Activated CD4-positive, alpha-beta memory T cell treated with anti-CD3 and anti-CD28 coated beads for 36 hours (primary cell): ENCODE measurements at regions of chr2 and their contacts with region 1.

Region 1: DNA sequence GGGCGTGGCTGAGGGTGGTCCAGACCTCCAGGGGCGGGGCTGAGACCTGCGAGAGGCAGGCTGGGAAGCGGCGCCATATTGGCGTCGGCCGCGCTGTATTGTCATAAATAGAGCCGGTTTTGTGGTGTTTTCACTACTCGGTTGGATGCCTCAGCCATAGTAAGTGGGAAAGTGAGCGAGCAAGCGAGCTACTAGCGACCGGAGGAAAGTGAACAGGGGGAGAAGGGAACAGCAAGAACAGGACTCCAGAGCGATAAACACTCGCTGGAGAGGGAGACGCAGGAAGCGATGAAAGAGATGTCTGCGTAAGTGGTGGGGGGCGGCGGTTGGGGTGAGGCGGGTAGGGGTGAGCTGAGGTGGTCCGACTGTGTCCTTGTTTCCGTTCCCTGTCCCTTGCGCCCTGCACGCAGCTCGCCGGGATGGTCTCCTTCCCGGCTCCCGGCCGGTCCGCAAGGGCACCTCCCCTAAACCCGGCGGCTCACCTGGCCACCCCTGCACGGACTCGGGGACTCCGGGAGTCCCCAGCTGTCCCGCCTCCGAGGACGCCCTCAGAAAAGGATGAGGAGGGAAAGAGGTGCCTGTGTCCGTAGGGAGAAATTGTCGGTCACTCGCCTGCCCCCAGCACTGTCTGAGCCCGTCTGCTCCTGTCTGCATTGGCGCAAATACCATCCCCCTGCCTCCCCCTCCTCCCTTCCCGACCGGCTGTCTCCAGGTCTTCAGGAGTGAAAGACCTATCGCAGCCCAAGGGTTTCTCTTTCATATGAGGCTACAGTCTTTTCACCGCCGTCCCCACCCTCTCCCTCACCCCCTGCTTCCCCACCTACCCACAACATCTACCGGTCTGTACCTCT is at the start of gene PAPOLG:
- DNase-seq: peak; percentile 98
- H3K4me3 Mint-ChIP-seq: peak within 1 kb of the TSS; percentile 99
- H3K27ac Mint-ChIP-seq: peak within 1 kb of the TSS; percentile 96
- H3K4me1 Mint-ChIP-seq: peaks cover 39% of the 10 kb centered on the region
- H3K27me3 Mint-ChIP-seq: no peaks in the 10 kb centered on the region
- total RNA-seq, gene PAPOLG: 14.4 to 15.7 TPM

Region 2: DNA sequence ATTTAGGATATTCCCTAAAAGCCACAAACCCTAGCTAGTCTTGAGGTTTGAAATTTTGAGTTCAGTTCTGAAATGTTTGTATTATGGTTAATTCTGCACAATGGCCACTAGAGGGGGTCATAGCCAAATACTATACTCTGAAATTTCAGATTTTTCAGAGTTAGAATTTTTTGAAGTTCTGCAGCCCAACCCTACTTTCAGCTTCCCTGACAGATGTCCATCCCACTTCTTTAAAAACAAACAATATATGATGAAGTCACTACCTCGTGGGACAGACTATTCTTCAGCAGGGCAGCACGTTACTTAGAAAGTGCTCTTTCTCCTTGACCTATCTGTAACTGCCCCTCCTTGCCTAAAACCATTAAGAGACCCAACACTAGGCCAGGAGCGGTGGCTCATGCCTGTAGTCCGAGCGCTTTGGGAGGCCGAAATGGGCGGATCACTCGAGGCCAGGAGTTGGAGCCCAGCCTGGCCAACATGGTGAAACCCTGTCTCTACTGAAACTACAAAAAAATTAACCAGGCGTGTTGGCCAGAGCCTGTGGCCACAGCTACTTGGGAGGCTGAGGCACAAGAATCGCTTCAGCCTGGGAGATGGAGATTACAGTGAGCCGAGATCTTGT is 48.6 kb before region 1 on chr2:
- CTCF ChIA-PET with region 1: interaction called, 10 read pairs
- POLR2A ChIA-PET with region 1: no interaction called
- intact Hi-C with region 1: loop called (anchors 1 kb)
- DNase-seq: no peak
- H3K4me3 Mint-ChIP-seq: no peak overlapping the region
- H3K27ac Mint-ChIP-seq: no peak overlapping the region
- H3K4me1 Mint-ChIP-seq: no peaks in the 10 kb centered on the region
- H3K27me3 Mint-ChIP-seq: peaks cover 1% of the 10 kb centered on the region